ENCODE measurements at regions of chr19 and their contacts with region 1.

Region 1: GRCh38 chr19:38647368-38647965 is at the start of gene ACTN4:
- DNase-seq: peak; percentile 100
- ATAC-seq: peak; percentile 83
- H3K4me3 ChIP-seq: peak within 1 kb of the TSS; percentile 50 to 68
- H3K27ac ChIP-seq: peak within 1 kb of the TSS; percentile 96
- H3K4me1 ChIP-seq: peaks cover 16% of the 10 kb centered on the region
- H3K27me3 ChIP-seq: no peaks in the 10 kb centered on the region
- CTCF ChIP-seq: no peak
- total RNA-seq, gene ACTN4: 3,297 TPM

Region 2: GRCh38 chr19:38319421-38320258 is 327.8 kb before region 1 on chr19 and contains the start of gene KCNK6:
- CTCF ChIA-PET with region 1: no interaction called
- POLR2A ChIA-PET with region 1: no interaction called
- in situ Hi-C with region 1: no loop called
- intact Hi-C with region 1: no loop called
- DNase-seq: no peak
- ATAC-seq: peak; percentile 27
- H3K4me3 ChIP-seq: peak within 1 kb of the TSS; percentile 58 to 86
- H3K27ac ChIP-seq: peak within 1 kb of the TSS; percentile 60
- H3K4me1 ChIP-seq: peaks cover 16% of the 10 kb centered on the region
- H3K27me3 ChIP-seq: no peaks in the 10 kb centered on the region
- CTCF ChIP-seq: no peak
- total RNA-seq, gene KCNK6: 17.2 TPM

Region 3: DNA sequence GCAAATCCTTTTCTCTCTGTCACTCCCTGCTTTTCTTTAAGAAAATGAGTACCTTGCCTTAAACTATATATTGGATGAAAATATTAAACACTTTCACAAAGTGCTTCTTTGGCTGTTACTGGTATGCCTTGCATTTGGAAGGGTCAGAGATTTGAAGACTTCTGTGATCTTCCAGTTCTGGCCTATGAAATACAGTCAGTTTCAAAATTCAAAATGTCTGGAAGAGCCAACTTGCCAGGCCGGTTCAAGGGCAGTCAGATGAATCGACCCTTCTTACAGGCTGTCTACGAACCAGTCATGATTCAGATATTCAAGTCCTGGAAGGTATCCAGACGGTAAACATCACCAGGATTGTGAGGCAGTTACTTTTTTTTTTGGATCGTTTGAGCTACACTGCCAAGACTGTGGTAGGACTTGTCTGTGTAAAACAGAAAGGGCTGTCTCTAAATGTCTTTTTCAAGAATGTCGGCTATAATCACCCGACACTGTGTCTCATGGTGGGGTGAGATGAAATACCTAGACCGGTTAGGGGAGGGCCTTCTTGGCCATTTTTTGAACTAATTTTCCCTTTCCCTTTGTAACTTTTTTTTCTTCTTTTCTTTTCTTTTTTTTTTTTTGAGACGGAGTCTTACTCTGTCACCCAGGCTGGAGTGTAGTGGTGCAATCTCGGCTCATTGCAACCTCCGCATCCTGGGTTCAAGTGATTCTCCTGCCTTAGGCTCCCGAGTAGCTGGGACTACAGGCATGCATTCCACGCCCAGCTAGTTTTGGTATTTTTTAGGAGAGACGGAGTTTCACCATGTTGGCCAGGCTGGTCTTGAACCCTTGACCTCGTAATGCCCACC is 11.2 kb after region 1 on chr19:
- CTCF ChIA-PET with region 1: no interaction called
- POLR2A ChIA-PET with region 1: interaction called, 23 read pairs
- in situ Hi-C with region 1: no loop called
- intact Hi-C with region 1: no loop called
- DNase-seq: peak; percentile 100
- ATAC-seq: peak; percentile 59
- H3K4me3 ChIP-seq: peak overlapping the region; percentile 2 to 31; a peak in 3 of 4 replicates
- H3K27ac ChIP-seq: peak overlapping the region; percentile 96
- H3K4me1 ChIP-seq: peaks cover 100% of the 10 kb centered on the region
- H3K27me3 ChIP-seq: no peaks in the 10 kb centered on the region
- CTCF ChIP-seq: no peak

Region 4: GRCh38 chr19:38666663-38667511 is 19.4 kb after region 1 on chr19:
- CTCF ChIA-PET with region 1: interaction called, 3 read pairs
- POLR2A ChIA-PET with region 1: interaction called, 23 read pairs
- in situ Hi-C with region 1: no loop called
- intact Hi-C with region 1: no loop called
- DNase-seq: no peak
- ATAC-seq: peak; percentile 34
- H3K4me3 ChIP-seq: peak overlapping the region in 1 of 2 experiments; percentile 12; a peak in 2 of 4 replicates
- H3K27ac ChIP-seq: peak overlapping the region; percentile 96
- H3K4me1 ChIP-seq: peaks cover 100% of the 10 kb centered on the region
- H3K27me3 ChIP-seq: no peaks in the 10 kb centered on the region
- CTCF ChIP-seq: no peak

Region 5: DNA sequence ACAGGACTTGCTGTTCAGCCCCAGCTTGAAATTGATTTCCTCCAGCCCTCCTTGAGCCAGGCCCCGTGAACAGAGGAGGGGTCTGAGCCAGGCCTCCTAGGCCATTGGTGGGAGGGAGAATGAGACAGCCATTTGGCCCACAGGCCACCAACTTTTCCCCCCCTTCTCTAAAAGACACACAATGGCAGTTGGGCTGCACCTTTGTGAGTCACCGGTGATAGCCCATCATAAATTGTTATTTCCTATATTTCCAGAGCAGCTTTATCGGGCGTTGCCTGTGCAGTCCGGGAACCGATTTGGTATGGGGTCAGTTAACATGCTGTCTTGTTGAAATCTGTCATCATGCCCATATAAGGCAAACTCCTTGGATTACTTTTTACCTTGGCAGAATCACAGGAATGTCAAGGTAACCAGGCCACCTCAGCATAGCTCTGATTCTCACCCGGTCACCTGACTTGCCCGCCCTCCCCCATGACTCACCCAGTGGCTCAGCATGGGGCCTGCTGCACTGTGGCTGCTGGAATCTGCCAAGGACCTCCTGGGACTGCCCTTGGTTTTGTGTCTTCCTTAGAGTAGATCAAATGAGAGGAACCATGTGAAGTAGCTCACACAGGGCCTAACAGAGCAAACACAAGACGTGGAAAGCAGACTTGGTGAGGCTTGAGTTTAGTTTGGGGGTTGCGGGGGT is 36.1 kb after region 1 on chr19:
- CTCF ChIA-PET with region 1: no interaction called
- POLR2A ChIA-PET with region 1: interaction called, 18 read pairs
- in situ Hi-C with region 1: no loop called
- intact Hi-C with region 1: no loop called
- DNase-seq: peak; percentile 100
- ATAC-seq: peak; percentile 87
- H3K4me3 ChIP-seq: peak overlapping the region in 1 of 2 experiments; percentile 10; a peak in 2 of 4 replicates
- H3K27ac ChIP-seq: peak overlapping the region; percentile 98
- H3K4me1 ChIP-seq: peaks cover 100% of the 10 kb centered on the region
- H3K27me3 ChIP-seq: no peaks in the 10 kb centered on the region
- CTCF ChIP-seq: no peak

Region 6: DNA sequence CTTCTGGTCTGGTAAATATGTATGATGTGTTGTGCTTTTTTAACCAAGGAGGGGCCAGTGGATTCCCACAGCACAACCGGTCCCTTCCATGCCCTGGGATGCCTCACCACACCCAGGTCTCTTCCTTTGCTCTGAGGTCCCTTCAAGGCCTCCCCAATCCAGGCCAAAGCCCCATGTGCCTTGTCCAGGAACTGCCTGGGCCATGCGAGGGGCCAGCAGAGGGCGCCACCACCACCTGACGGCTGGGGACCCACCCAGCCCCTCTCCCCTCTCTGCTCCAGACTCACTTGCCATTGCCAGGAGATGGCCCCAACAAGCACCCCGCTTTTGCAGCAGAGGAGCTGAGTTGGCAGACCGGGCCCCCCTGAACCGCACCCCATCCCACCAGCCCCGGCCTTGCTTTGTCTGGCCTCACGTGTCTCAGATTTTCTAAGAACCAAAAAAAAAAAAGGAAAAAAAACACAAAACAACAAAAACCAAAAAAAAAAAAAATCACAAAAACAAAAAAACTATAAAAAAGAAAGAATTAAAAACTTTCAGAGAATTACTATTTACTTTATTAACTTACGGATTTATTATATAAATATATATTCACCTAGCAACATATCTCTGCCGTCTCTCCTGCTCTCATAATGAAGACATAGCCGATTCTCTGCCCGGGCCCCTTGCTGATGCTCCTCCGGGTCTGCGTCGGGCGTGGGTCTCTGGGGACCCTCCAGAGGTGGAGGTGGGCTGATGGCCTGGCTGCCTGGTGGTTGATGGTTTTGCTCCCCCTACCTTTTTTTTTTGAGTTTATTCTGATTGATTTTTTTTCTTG is 82.4 kb after region 1 on chr19:
- CTCF ChIA-PET with region 1: interaction called, 3 read pairs
- POLR2A ChIA-PET with region 1: interaction called, 3 read pairs
- in situ Hi-C with region 1: no loop called
- intact Hi-C with region 1: loop called (anchors 5 kb)
- DNase-seq: peak; percentile 61
- ATAC-seq: peak; percentile 46
- H3K4me3 ChIP-seq: no peak overlapping the region
- H3K27ac ChIP-seq: peak overlapping the region; percentile 93
- H3K4me1 ChIP-seq: peaks cover 96% of the 10 kb centered on the region
- H3K27me3 ChIP-seq: no peaks in the 10 kb centered on the region
- CTCF ChIP-seq: no peak

Region 7: DNA sequence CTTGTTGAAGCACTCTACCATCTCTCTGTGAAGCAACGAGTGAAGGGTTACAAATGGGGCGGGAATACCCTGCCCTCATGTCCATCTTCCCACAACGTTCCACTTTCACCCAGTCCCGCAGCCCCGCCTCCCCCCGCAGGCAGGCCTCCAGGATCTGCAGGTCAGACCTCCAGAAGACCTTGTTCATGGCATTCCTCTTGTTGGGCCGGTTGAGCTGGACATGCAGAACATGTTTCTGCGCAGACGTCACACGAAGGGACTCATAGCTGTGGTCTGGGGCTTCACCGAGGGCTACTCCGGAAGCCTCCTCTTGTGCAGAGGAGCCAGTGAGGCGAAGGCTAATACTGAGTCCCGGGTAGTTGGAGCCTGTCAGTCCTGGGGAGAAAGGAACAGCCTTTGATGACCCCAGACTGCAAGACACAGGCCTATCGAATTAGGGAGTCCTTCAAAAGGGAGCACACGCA is 183.7 kb after region 1 on chr19:
- CTCF ChIA-PET with region 1: no interaction called
- POLR2A ChIA-PET with region 1: interaction called, 20 read pairs
- in situ Hi-C with region 1: no loop called
- intact Hi-C with region 1: loop called (anchors 5 kb)
- DNase-seq: no peak
- ATAC-seq: peak; percentile 59
- H3K4me3 ChIP-seq: peak overlapping the region; percentile 51 to 78
- H3K27ac ChIP-seq: peak overlapping the region; percentile 97
- H3K4me1 ChIP-seq: peaks cover 55% of the 10 kb centered on the region
- H3K27me3 ChIP-seq: no peaks in the 10 kb centered on the region
- CTCF ChIP-seq: no peak

Region 8: DNA sequence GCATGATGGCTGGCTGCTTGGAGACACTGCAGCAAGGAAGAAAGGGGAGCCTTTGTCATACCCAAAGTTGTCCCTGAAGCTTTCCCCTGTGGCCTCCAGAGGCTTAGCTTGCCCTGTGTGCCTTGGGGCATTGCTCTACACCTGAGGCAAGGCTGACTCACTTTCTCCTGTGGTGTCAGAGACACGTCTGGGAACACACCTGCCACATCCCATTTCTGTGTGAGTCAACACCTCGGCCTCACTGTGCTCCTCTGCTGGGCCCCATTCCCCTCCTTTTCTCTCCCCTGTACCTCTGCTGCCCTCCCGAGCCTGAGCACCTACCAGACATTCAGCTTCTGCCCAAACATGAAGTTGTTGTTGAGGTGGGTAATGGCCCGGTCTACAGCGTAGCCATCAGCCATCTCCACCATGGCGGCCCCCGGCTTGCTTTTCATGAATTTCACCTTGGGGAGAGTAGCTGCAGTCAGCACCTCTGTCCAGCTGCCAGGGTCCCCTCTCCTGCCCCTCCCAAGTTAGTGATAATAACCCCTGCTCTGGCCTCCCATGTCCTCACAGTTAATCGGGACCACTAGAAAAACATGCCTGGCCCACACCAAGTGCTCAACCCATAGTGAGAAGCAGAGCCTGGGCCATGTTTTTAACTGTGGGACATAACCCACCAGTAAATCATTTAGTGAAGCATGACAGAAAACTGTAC is 191.3 kb after region 1 on chr19:
- CTCF ChIA-PET with region 1: no interaction called
- POLR2A ChIA-PET with region 1: interaction called, 20 read pairs
- in situ Hi-C with region 1: no loop called
- intact Hi-C with region 1: loop called (anchors 5 kb)
- DNase-seq: no peak
- ATAC-seq: peak; percentile 39
- H3K4me3 ChIP-seq: no peak overlapping the region
- H3K27ac ChIP-seq: peak overlapping the region; percentile 86
- H3K4me1 ChIP-seq: peaks cover 98% of the 10 kb centered on the region
- H3K27me3 ChIP-seq: no peaks in the 10 kb centered on the region
- CTCF ChIP-seq: no peak

Region 9: DNA sequence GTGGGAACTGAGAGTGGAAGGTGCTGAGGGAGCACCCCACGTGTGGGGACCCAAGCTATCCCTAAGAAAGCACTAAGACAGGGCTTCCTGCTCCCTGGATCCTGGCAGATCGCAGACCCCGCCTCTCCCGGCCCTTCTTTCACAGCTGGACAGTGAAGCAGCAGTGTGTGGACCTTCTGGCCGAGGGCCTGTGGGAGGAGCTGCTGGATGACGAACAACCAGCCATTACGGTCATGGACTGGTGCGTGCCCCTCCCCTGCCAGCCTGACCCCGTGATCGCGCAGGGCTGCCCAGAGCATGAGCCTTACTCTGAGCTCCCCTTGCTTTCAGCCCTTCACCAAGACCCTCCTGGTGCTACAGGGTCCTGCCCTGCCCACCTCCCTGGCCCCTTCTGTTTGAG is 551.6 kb after region 1 on chr19:
- CTCF ChIA-PET with region 1: no interaction called
- POLR2A ChIA-PET with region 1: no interaction called
- in situ Hi-C with region 1: no loop called
- intact Hi-C with region 1: no loop called
- DNase-seq: no peak
- ATAC-seq: peak; percentile 19
- H3K4me3 ChIP-seq: no peak overlapping the region
- H3K27ac ChIP-seq: no peak overlapping the region
- H3K4me1 ChIP-seq: peaks cover 13% of the 10 kb centered on the region
- H3K27me3 ChIP-seq: peaks cover 3% of the 10 kb centered on the region; the same call in 1 of the 2 replicates
- CTCF ChIP-seq: no peak